Psoas muscle (tissue), 8 donors: ENCODE measurements at regions of chrX and their contacts with region 1.

Region 1: DNA sequence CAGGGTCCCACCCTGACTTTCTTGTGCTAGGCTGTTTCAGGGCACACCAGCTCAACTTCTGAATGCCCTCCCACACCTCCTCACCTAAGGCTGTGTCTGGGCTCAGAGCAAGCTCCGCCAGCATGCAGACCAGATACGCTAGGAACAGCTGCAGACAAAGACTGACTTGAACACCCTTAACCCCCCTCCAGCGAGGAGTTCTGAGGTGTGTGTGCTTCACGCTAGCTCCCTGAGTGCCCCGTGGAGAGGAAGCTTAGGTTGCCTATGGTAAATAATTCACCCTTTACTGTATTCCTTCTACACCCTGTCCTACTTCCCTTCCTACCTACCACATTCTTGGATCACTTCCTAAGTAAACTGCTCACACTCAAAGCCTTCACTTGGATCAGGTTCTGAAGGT is 115.0 kb downstream of the VCX3B start:
- DNase-seq: no peak
- ATAC-seq: no peak
- H3K4me3 ChIP-seq: no peak overlapping the region
- H3K27ac ChIP-seq: no peak overlapping the region
- H3K4me1 ChIP-seq: no peaks in the 10 kb centered on the region
- H3K27me3 ChIP-seq: no peaks in the 10 kb centered on the region
- CTCF ChIP-seq: no peak

Region 2: GRCh38 chrX:10401239-10401638 is 1821.6 kb after region 1 on chrX:
- intact Hi-C with region 1: loop called in 1 of 2 experiments (anchors 5 kb)
- DNase-seq: no peak
- ATAC-seq: no peak
- H3K4me3 ChIP-seq: no peak overlapping the region
- H3K27ac ChIP-seq: no peak overlapping the region
- H3K4me1 ChIP-seq: no peaks in the 10 kb centered on the region
- H3K27me3 ChIP-seq: no peaks in the 10 kb centered on the region
- CTCF ChIP-seq: no peak